Activated CD4-positive, alpha-beta memory T cell treated with anti-CD3 and anti-CD28 coated beads for 36 hours (primary cell): ENCODE measurements at regions of chr17 and their contacts with region 1.

Region 1: GRCh38 chr17:79810130-79811010 is 13.5 kb upstream of the CBX8 start:
- DNase-seq: peak; percentile 87
- H3K4me3 Mint-ChIP-seq: peak overlapping the region; percentile 23
- H3K27ac Mint-ChIP-seq: no peak overlapping the region
- H3K4me1 Mint-ChIP-seq: peaks cover 33% of the 10 kb centered on the region
- H3K27me3 Mint-ChIP-seq: peaks cover 64% of the 10 kb centered on the region

Region 2: DNA sequence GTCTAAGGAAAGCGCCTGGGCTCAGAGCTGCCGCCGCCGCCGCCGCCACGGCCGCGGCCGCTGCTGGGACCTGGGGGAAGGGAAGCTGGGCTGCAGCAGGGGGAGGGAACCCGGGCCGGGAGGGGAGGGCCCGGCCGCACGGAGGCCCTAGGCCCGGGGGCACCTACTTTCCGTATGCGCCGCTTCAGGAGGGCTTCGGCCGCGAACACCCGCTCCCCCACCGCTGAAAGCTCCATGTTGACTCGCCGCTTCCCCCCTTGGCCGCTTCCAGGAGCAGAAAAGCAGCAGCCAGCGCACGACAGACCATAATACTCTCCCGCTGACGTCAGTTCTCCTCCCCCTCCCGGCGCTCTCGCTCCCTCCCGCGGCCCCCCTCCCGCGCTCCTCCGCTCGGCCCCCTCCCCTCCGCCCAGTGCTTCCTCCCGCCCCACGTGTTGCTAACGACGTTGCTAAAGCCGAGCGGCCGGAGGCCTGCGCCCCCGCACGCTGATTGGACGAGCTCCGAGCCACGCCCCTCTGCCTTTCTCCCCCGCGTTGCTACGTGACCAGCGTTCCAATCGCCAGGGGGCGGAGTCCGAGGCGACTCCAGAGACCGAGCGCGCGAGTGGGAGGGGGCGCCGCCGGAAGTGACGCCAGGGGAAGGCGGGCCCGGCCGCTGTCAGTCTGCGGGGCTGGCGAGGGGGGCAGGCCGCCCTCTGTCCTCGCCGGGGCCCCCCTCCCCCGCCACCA is 13.4 kb before region 1 on chr17 and contains the start of gene CBX8:
- CTCF ChIA-PET with region 1: interaction called, 7 read pairs
- POLR2A ChIA-PET with region 1: interaction called, 6 read pairs
- intact Hi-C with region 1: loop called (anchors 2 kb)
- DNase-seq: peak; percentile 100
- H3K4me3 Mint-ChIP-seq: peak within 1 kb of the TSS; percentile 76
- H3K27ac Mint-ChIP-seq: peak within 1 kb of the TSS; percentile 69
- H3K4me1 Mint-ChIP-seq: peaks cover 29% of the 10 kb centered on the region
- H3K27me3 Mint-ChIP-seq: peaks cover 35% of the 10 kb centered on the region
- total RNA-seq, gene CBX8: 4.5 to 4.6 TPM

Region 3: DNA sequence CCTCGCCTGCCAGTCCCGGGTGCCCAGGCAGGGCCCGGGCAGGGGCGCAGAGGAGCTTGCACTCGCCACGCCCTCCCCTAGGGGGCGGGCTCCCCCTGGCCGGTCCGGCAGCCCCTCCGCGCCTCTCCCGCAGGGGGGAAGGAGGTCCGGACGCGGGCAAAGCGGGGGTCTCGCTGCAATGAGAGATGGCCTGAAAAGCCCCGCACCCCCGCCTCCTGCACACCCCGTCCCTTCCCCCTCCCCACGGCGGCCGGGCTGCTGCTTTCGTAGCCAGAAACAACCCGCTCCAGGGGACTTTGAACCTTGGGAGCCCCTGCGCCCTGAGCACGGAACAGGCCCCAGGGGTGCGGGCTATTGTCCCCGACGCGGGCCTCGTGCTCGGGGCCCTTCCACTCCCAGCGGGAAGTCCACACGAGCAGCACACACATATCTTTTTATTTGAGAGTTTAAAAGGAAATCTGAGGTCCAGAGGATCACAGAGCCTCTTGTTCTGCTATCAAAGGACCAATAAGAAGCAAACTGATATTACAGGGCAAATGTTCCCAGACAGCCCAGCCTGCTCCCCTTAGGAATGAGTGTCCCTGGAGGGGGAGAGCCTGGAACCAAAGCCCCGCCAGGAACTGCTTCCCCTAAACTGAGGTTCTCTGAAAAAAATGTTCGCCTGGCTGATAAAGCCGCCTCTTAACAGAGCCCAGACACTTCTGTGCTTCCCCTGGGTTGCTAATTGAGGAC is 34.7 kb after region 1 on chr17:
- CTCF ChIA-PET with region 1: interaction called, 49 read pairs
- POLR2A ChIA-PET with region 1: interaction called, 19 read pairs
- intact Hi-C with region 1: no loop called
- DNase-seq: peak; percentile 63
- H3K4me3 Mint-ChIP-seq: no peak overlapping the region
- H3K27ac Mint-ChIP-seq: no peak overlapping the region
- H3K4me1 Mint-ChIP-seq: peaks cover 21% of the 10 kb centered on the region
- H3K27me3 Mint-ChIP-seq: peaks cover 37% of the 10 kb centered on the region

Region 4: GRCh38 chr17:79942591-79943346 is 132.4 kb after region 1 on chr17:
- CTCF ChIA-PET with region 1: no interaction called
- POLR2A ChIA-PET with region 1: no interaction called
- intact Hi-C with region 1: no loop called
- DNase-seq: peak; percentile 42
- H3K4me3 Mint-ChIP-seq: no peak overlapping the region
- H3K27ac Mint-ChIP-seq: no peak overlapping the region
- H3K4me1 Mint-ChIP-seq: peaks cover 8% of the 10 kb centered on the region
- H3K27me3 Mint-ChIP-seq: no peaks in the 10 kb centered on the region